ENCODE measurements at regions of chr10 and their contacts with region 1.

Region 1: DNA sequence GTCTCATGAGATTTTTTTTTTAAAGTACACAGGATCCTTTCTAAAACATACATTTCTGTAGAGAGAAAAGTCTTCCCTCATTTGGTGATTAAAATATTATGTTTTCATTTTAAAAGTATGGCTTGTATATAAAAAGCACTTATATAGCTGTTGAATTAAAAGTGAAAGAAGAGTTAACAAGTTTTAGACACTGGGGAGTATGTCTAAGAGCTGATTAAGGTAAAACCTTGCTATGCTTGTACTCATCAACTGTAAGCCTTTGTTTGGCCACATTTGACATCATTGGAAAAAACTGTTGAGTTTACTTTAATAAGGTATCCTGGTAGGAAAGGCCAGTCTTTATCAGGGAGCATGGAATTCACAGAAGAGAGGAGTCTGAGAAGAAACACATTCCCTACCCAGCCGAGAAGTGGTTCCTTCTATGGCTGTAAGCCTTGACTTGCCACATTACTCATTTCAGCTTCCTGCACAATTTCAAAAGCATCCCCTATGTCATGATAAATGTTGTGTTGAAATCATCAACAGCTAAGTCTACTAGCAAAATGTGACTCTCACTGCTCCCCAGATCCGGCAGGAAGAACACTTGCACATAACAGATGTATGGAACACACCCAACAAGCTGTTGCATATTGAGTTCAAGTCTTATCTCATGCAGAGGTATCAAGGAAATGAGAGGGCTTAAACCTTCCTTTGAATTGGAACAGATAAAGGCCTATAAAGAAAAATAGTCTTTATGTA is 171.8 kb upstream of the CDK1 start:
- DNase-seq: peak; percentile 45
- H3K4me3 ChIP-seq: no peak overlapping the region
- CTCF ChIP-seq: no peak

Region 2: GRCh38 chr10:60594476-60595051 is 11.9 kb before region 1 on chr10:
- CTCF ChIA-PET with region 1: interaction called, 12 read pairs
- POLR2A ChIA-PET with region 1: no interaction called
- DNase-seq: no peak
- H3K4me3 ChIP-seq: no peak overlapping the region
- CTCF ChIP-seq: peak; percentile 5

Region 3: DNA sequence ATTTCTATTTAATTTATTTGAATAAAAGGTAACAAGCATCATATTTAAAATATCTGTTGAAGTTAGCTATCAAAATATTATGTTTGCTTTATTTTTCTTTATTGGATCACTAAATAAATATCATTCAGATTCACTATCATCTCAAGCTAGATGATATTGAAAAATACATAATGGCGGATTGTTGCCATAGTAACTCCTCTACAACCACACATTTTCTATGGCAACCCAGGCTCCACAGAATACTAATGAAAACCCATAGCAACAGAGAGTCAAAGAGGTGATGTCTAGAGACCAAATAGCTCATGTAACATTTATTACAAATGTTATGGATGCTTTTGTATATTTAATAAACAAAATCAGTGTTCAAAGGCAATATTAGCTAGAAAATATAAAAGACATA is 22.8 kb after region 1 on chr10:
- CTCF ChIA-PET with region 1: no interaction called
- POLR2A ChIA-PET with region 1: no interaction called
- DNase-seq: no peak
- H3K4me3 ChIP-seq: no peak overlapping the region
- CTCF ChIP-seq: no peak

Measured in AG04449 (cell line).